Endothelial cell of umbilical vein (primary cell): ENCODE measurements at regions of chr4 and their contacts with region 1.

Region 1: GRCh38 chr4:101977076-101977475 is 186.5 kb downstream of the BANK1 start:
- DNase-seq: peak; percentile 91
- H3K4me3 ChIP-seq: no peak overlapping the region
- H3K27ac ChIP-seq: peak overlapping the region; percentile 5
- H3K4me1 ChIP-seq: peaks cover 14% of the 10 kb centered on the region
- H3K27me3 ChIP-seq: no peaks in the 10 kb centered on the region
- CTCF ChIP-seq: no peak
- POLR2A ChIP-seq: no peak

Region 2: GRCh38 chr4:101944649-101945048 is 32.4 kb before region 1 on chr4:
- CTCF ChIA-PET with region 1: no interaction called
- POLR2A ChIA-PET with region 1: no interaction called
- dilution Hi-C with region 1: no loop called
- intact Hi-C with region 1: no loop called
- DNase-seq: no peak
- H3K4me3 ChIP-seq: no peak overlapping the region
- H3K27ac ChIP-seq: no peak overlapping the region
- H3K4me1 ChIP-seq: no peaks in the 10 kb centered on the region
- H3K27me3 ChIP-seq: no peaks in the 10 kb centered on the region
- CTCF ChIP-seq: no peak
- POLR2A ChIP-seq: no peak

Region 3: DNA sequence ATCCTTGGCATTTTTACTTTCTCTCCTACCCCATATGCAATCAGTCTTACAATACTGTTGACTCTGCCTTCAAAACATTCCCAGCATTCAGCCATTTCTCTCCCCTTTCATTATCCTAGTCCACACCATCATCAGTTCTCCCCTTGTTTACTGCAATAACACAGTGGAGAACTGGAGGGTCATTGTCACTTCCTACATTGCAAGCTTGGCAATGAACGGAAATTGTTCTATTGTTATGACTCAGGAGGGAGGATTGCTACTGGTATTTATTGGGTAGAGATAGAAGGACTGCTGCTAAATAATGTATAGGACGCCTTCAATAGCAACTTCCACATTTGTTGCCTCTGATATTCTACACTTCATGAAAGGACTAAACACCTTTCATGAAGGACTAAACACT is 45.3 kb after region 1 on chr4:
- CTCF ChIA-PET with region 1: no interaction called
- POLR2A ChIA-PET with region 1: no interaction called
- dilution Hi-C with region 1: no loop called
- intact Hi-C with region 1: loop called (anchors 1 kb)
- DNase-seq: peak; percentile 69
- H3K4me3 ChIP-seq: no peak overlapping the region
- H3K27ac ChIP-seq: peak overlapping the region; percentile 6
- H3K4me1 ChIP-seq: peaks cover 4% of the 10 kb centered on the region
- H3K27me3 ChIP-seq: no peaks in the 10 kb centered on the region
- CTCF ChIP-seq: no peak
- POLR2A ChIP-seq: no peak